Heart left ventricle (tissue), 16 donors: ENCODE measurements at regions of chr18 and their contacts with region 1.

Region 1: DNA sequence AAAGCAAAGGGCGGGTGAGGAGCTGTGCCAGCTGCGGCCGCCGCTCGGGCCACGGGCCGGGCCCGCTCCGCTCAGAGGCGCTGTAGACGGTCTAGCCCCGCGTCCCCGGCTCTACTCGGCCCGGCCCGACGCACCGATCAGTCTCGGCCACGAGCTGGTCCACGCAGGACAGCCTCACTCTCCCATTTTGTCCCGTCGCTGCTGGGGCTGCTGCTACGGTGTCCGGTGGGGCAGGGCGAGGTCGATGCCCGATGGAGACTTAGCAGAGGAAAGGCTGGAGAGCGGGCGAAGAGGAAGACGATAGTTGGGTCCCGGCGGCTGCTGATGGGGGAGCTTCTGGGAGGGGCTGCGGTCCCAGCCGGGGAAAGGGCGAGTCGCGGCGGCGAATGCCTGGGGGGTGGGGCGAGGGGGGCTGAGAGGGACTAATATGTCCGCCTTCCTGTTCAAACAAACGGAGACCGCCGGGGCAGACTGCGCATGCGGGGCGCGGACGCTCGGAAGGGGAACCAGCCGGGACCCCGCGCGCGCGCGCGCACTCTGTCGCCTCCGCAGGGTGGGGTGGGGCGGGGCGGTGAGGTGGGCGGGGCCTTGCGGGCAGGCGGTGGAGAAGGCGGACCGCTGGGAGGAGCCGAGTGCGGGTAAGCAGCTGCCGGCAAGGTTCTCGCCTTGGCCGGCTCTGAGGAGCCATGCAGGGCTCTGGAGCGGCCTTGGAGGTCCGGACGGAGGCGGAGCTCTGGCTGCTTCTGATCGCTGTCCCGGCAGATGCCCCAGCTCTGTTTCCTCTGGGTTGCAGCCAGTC is at the start of gene ROCK1:
- DNase-seq: peak; percentile 99 to 100 (median 99)
- ATAC-seq: peak; percentile 96 to 98 (median 97)
- H3K4me3 ChIP-seq: peak within 1 kb of the TSS; percentile 64 to 98 (median 93)
- H3K27ac ChIP-seq: peak within 1 kb of the TSS; percentile 92 to 98 (median 96)
- H3K4me1 ChIP-seq: peaks cover 0 to 48% (median 27%) of the 10 kb centered on the region in 12 donors
- H3K27me3 ChIP-seq: no peaks in the 10 kb centered on the region
- CTCF ChIP-seq: peak in 1 of 12 donors; percentile 11
- POLR2A ChIP-seq: peak in 1 of 2 donors; percentile 88
- total RNA-seq, gene ROCK1: 25.1 to 46.2 (median 37.8) TPM

Region 2: GRCh38 chr18:20971886-20972267 is 139.7 kb before region 1 on chr18:
- intact Hi-C with region 1: loop called in 2 of 10 experiments (anchors 10 kb)
- DNase-seq: no peak
- ATAC-seq: no peak
- H3K4me3 ChIP-seq: no peak overlapping the region
- H3K27ac ChIP-seq: no peak overlapping the region
- H3K4me1 ChIP-seq: no peaks in the 10 kb centered on the region
- H3K27me3 ChIP-seq: no peaks in the 10 kb centered on the region
- CTCF ChIP-seq: peak in 11 of 12 donors; percentile 18 to 51 (median 31)
- POLR2A ChIP-seq: no peak

Region 3: DNA sequence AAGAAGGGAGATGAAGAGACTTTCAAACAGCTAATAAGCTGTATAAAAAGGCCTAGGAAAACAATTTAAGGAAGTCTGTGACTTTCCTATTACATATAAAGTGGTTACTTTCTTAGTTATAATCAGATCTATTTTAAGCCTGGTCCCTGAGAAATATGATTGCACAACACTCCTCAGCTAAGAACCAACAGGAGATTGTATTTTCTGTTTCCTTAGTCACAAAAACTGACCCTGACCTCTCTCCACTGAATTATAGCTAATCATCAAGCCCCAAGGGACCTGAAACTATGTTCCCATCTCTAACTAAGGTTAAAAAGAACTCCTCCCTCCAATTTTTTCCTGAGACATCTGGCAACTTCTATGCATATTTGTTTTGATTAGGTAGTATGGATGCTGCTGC is 106.8 kb before region 1 on chr18:
- intact Hi-C with region 1: loop called in 7 of 10 experiments (anchors 2 to 10 kb)
- DNase-seq: peak in 2 of 5 donors; percentile 21 to 38
- ATAC-seq: peak; percentile 88 to 95 (median 92)
- H3K4me3 ChIP-seq: no peak overlapping the region
- H3K27ac ChIP-seq: peak overlapping the region; percentile 6 to 78 (median 56)
- H3K4me1 ChIP-seq: peaks cover 0 to 31% (median 18%) of the 10 kb centered on the region in 12 donors
- H3K27me3 ChIP-seq: no peaks in the 10 kb centered on the region
- CTCF ChIP-seq: no peak
- POLR2A ChIP-seq: no peak

Region 4: DNA sequence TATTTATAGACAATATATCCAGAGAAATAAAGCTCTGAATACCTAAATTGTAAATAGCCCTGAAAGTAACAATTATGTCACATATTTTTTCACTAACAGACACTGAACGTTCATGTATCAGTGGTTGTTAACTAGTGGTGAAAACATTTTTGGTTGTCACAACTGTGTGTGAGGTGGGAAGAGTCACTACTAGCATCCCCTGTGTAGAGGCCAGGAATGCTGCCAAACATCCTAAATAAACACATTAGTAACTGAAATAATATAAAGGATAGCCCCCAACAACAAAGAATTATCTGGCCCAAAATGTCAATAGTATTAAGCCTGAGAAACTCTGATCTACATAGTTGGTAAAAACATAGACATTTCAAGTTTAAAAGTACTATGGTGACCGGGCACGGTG is 64.4 kb before region 1 on chr18:
- intact Hi-C with region 1: loop called in 4 of 10 experiments (anchors 2 to 10 kb)
- DNase-seq: no peak
- ATAC-seq: no peak
- H3K4me3 ChIP-seq: no peak overlapping the region
- H3K27ac ChIP-seq: no peak overlapping the region
- H3K4me1 ChIP-seq: peaks cover 0 to 43% (median 23%) of the 10 kb centered on the region in 12 donors
- H3K27me3 ChIP-seq: no peaks in the 10 kb centered on the region
- CTCF ChIP-seq: no peak
- POLR2A ChIP-seq: no peak

Region 5: DNA sequence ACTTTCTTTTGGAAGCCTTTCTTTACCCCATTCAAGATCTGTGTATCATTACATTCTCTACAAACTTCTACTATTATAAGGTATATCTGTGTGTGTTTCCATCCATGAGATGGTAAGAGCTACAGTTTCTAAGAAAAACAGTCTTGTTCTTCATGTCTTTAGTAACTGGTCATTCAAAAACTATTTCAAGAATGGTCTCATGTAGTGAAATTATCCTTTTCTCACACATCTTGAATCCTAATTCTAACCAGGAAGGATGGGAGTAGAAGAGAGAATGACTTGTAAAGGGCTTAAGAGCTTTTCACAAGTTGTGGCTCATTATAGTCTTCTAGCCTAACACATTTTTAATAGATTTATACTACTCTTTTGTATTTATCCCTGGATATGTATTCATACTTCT is 47.2 kb before region 1 on chr18:
- intact Hi-C with region 1: loop called in 4 of 10 experiments (anchors 5 to 10 kb)
- DNase-seq: no peak
- ATAC-seq: no peak
- H3K4me3 ChIP-seq: no peak overlapping the region
- H3K27ac ChIP-seq: no peak overlapping the region
- H3K4me1 ChIP-seq: no peaks in the 10 kb centered on the region
- H3K27me3 ChIP-seq: no peaks in the 10 kb centered on the region
- CTCF ChIP-seq: no peak
- POLR2A ChIP-seq: no peak

Region 6: DNA sequence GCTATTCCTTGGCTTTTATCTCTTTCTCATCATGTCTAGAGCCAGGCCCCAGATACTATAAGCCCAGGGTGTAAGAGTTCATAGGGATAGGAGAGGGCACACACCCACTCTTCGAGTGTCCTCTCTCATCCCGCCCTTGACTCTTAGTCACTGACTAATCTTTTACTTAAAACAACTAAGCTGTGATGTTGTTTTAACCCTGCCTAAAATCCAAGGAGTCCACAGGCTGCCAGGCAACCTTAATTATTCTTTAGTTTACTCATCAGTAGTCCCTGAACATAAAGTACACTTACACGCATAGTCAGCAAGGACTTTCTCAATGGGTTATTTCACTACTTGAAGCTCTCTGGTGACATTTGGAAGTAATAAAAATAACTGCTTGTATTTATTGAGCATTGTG is 158.9 kb after region 1 on chr18:
- intact Hi-C with region 1: no loop called
- DNase-seq: no peak
- ATAC-seq: no peak
- H3K4me3 ChIP-seq: no peak overlapping the region
- H3K27ac ChIP-seq: no peak overlapping the region
- H3K4me1 ChIP-seq: peaks cover 0 to 2% (median 0%) of the 10 kb centered on the region in 12 donors
- H3K27me3 ChIP-seq: no peaks in the 10 kb centered on the region
- CTCF ChIP-seq: no peak
- POLR2A ChIP-seq: no peak